Panc1 (cell line): ENCODE measurements at regions of chr7 and their contacts with region 1.

Region 1: DNA sequence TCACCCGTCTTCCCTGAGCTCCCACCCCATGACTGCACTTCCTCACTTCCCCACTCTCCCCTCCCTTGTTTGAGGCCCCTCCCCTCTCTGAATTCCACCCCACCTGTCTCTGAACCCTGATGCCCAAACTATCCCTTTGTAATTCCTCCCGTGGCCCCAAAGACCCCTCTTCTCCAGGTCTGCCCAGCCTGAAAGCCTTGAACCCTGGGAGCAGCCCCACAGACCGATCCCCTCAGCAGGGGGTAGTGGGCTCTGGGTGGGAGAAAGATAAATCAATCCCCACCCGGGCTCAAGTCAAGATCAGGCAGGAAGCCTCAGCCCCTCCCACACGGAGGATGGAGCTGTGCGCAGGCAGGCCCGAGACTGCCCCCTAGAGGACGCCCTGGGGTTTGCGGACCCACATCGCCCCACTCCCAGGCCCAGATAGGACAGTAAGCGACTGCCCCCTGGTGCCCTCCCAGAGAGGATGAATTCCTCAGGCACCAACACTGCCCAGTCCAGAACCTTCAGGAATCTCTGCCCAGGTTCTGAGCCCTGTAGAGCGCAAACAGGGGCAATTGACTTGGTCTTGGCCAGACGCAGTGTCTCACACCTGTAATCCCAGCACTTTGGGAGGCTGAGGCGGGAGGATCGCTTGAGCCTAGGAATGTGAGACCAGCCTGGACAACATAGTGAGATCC is 11.7 kb downstream of the HSPB1 start:
- DNase-seq: no peak
- ATAC-seq: peak; percentile 77
- H3K4me3 ChIP-seq: peak overlapping the region in 1 of 2 experiments; percentile 33; a peak in 1 of 4 replicates
- H3K27ac ChIP-seq: peak overlapping the region; percentile 72
- H3K4me1 ChIP-seq: peaks cover 17% of the 10 kb centered on the region
- H3K27me3 ChIP-seq: no peaks in the 10 kb centered on the region
- CTCF ChIP-seq: peak; percentile 100

Region 2: DNA sequence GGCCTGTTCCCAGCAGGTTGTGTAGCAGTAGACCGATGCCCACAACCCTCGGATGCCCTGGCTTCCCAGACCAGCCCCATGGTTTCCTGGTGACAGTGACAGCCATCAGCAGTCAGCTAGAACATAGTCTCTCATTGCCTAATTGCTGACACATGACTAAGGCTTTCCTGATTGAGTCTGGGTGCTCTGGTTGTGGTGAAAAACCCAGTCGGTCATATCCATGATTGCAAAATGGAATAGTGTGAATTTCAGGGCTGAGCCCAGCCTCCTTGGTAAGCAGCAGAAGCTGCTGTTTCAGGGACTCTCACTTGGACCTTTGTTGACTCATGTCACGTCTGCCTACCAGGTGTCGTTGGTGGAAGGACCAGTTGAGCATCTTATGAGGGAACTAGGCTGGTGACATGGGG is 362.7 kb before region 1 on chr7:
- CTCF ChIA-PET with region 1: no interaction called
- POLR2A ChIA-PET with region 1: no interaction called
- in situ Hi-C with region 1: no loop called
- intact Hi-C with region 1: no loop called
- DNase-seq: no peak
- ATAC-seq: no peak
- H3K4me3 ChIP-seq: no peak overlapping the region
- H3K27ac ChIP-seq: no peak overlapping the region
- H3K4me1 ChIP-seq: peaks cover 12% of the 10 kb centered on the region
- H3K27me3 ChIP-seq: no peaks in the 10 kb centered on the region
- CTCF ChIP-seq: no peak

Region 3: DNA sequence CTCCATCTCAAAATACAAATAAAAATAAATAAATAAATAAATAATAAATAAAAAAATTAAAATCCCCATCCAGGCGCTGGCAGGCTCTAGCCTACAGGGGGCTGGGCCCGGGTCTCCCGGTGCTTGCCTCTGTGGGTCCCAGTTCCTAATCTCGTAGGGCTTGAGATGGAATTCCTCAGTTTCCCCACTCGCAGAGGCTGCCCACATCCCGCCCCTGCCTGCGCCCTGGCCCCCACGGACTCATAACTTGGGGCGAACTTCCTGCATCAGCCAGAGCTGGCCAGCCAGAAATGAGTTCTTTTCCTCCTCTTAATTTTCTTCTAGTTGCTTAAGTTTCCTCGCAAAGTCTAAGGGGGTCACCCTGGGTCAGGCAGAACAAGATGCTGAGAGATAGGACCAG is 134.5 kb before region 1 on chr7:
- CTCF ChIA-PET with region 1: interaction called, 3 read pairs
- POLR2A ChIA-PET with region 1: no interaction called
- in situ Hi-C with region 1: no loop called
- intact Hi-C with region 1: loop called (anchors 2 kb)
- DNase-seq: no peak
- ATAC-seq: no peak
- H3K4me3 ChIP-seq: no peak overlapping the region
- H3K27ac ChIP-seq: no peak overlapping the region
- H3K4me1 ChIP-seq: no peaks in the 10 kb centered on the region
- H3K27me3 ChIP-seq: no peaks in the 10 kb centered on the region
- CTCF ChIP-seq: no peak

Region 4: GRCh38 chr7:76282344-76283253 is 31.6 kb before region 1 on chr7:
- CTCF ChIA-PET with region 1: interaction called, 17 read pairs
- POLR2A ChIA-PET with region 1: interaction called, 4 read pairs
- in situ Hi-C with region 1: no loop called
- intact Hi-C with region 1: no loop called
- DNase-seq: no peak
- ATAC-seq: peak; percentile 56
- H3K4me3 ChIP-seq: peak overlapping the region; percentile 59 to 65
- H3K27ac ChIP-seq: 0 out of 2 replicates have a peak overlapping the region, but pooled peaks have one; percentile 23
- H3K4me1 ChIP-seq: peaks cover 23% of the 10 kb centered on the region
- H3K27me3 ChIP-seq: no peaks in the 10 kb centered on the region
- CTCF ChIP-seq: no peak